ENCODE measurements at regions of chr7 and their contacts with region 1.

Region 1: DNA sequence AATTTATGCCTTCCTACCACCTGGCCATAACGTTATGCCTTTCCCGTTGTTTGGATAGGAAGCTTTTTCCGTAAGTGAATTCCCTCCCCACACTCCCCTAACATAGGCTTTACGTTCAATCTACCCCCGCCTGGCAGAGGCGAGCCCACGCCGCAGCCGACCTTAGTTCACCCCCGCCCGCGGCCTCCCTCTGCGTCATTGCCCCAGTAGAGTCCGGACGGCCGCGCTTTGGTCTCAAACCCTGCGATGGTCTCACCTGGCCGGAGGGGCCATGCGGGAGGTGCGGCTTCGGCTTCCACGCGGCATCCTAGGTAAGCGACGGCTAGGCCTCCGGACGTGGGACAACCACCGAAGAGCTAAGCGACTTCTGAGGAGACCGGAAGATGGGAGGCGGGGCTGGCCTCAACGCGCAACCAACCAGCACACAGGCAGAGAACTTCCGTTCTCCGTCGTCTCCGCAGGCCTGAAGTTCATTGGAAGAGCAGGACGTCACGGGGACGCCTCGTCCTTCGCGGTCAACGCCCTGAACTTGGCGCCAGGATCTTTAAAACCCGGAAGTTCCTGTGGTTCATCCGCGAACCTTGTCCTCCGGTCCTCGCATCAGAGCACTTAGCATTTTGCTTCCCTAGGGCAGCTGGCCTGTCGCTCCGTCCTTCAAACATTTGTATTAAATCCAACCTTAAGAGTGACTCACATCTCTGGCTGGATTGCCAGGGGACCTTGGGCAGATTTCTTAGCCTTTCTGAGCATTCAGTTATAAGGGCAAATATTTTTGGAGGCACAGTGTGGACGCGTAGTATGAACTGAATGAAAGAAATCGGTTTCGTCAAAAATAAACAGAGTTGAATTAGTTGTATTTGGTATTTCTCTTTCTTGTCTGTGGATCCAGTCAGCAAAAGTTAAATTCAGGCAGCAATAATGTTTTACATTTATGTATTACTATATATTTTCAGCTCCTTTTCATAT is at the start of gene CHCHD2:
- DNase-seq: peak; percentile 96 to 98
- H3K4me3 ChIP-seq: peak within 1 kb of the TSS; percentile 94
- H3K4me1 ChIP-seq: peaks cover 5% of the 10 kb centered on the region
- H3K27me3 ChIP-seq: no peaks in the 10 kb centered on the region

Region 2: DNA sequence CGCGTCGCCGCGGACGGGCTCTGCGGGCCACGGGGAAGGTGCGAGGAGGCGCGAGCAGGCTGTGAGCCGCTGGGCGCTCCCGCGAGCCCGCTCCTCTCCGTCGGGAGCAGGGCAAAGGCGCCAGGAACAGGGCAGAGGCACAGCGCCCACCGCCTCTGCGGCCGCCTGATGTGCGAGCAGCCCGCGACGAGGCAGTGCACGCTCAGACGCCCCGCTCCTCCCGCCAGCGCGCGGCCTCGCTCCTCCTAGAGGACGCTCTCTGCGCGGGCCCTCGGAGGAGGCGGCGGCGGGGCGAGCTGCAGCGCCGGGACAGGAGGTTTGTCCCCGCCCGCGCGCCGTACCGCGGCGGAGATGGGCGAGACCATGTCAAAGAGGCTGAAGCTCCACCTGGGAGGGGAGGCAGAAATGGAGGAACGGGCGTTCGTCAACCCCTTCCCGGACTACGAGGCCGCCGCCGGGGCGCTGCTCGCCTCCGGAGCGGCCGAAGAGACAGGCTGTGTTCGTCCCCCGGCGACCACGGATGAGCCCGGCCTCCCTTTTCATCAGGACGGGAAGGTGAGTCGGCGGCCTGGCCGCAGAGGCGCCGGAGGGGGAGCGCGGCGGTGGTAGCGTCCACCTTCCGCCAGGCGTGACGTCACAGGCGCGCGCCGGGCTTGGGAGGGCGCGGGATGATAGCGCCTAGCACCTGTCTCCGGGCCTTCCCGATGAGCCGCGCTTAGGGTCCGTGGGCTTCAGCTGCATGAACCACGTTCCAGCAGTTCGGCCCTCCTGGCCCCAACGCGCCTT is 740.5 kb before region 1 on chr7:
- in situ Hi-C with region 1: loop called (anchors 10 kb)
- DNase-seq: peak; percentile 79 to 91
- H3K4me3 ChIP-seq: peak overlapping the region; percentile 99
- H3K4me1 ChIP-seq: peaks cover 6% of the 10 kb centered on the region
- H3K27me3 ChIP-seq: no peaks in the 10 kb centered on the region